ENCODE measurements at regions of chr7 and their contacts with region 1.

Region 1: GRCh38 chr7:43439631-43440401 is 143.1 kb upstream of the STK17A start:
- DNase-seq: no peak
- H3K4me3 ChIP-seq: no peak overlapping the region
- H3K27ac ChIP-seq: no peak overlapping the region
- H3K4me1 ChIP-seq: no peaks in the 10 kb centered on the region
- H3K27me3 ChIP-seq: no peaks in the 10 kb centered on the region
- CTCF ChIP-seq: peak in 1 of 3 experiments; percentile 22
- POLR2A ChIP-seq: no peak

Region 2: GRCh38 chr7:42278344-42278743 is 1161.5 kb before region 1 on chr7:
- intact Hi-C with region 1: loop called (anchors 5 kb)
- DNase-seq: no peak
- H3K4me3 ChIP-seq: no peak overlapping the region
- H3K27ac ChIP-seq: no peak overlapping the region
- H3K4me1 ChIP-seq: no peaks in the 10 kb centered on the region
- H3K27me3 ChIP-seq: no peaks in the 10 kb centered on the region
- CTCF ChIP-seq: no peak
- POLR2A ChIP-seq: no peak

Region 3: GRCh38 chr7:43572516-43573049 is 132.8 kb after region 1 on chr7:
- intact Hi-C with region 1: no loop called
- DNase-seq: no peak
- H3K4me3 ChIP-seq: no peak overlapping the region
- H3K27ac ChIP-seq: no peak overlapping the region
- H3K4me1 ChIP-seq: peaks cover 6% of the 10 kb centered on the region
- H3K27me3 ChIP-seq: no peaks in the 10 kb centered on the region
- CTCF ChIP-seq: no peak
- POLR2A ChIP-seq: no peak

Region 4: GRCh38 chr7:43582503-43583423 is 142.9 kb after region 1 on chr7 and contains the start of gene STK17A:
- intact Hi-C with region 1: no loop called
- DNase-seq: peak; percentile 96 to 98
- H3K4me3 ChIP-seq: peak within 1 kb of the TSS; percentile 64 to 82
- H3K27ac ChIP-seq: peak within 1 kb of the TSS; percentile 92
- H3K4me1 ChIP-seq: peaks cover 30% of the 10 kb centered on the region
- H3K27me3 ChIP-seq: no peaks in the 10 kb centered on the region
- CTCF ChIP-seq: peak; percentile 97 to 100 (median 99)
- POLR2A ChIP-seq: peak in 1 of 2 donors; percentile 75
- total RNA-seq, gene STK17A: 16.7 TPM